ENCODE measurements at regions of chr1 and their contacts with region 1.

Region 1: GRCh38 chr1:240732390-240732789 is 120.4 kb upstream of the GREM2 start:
- DNase-seq: no peak
- ATAC-seq: peak; percentile 53
- H3K4me3 Mint-ChIP-seq: no peak overlapping the region
- H3K27ac Mint-ChIP-seq: no peak overlapping the region
- H3K4me1 Mint-ChIP-seq: no peaks in the 10 kb centered on the region
- H3K27me3 Mint-ChIP-seq: no peaks in the 10 kb centered on the region
- CTCF ChIP-seq: peak; percentile 64

Region 2: DNA sequence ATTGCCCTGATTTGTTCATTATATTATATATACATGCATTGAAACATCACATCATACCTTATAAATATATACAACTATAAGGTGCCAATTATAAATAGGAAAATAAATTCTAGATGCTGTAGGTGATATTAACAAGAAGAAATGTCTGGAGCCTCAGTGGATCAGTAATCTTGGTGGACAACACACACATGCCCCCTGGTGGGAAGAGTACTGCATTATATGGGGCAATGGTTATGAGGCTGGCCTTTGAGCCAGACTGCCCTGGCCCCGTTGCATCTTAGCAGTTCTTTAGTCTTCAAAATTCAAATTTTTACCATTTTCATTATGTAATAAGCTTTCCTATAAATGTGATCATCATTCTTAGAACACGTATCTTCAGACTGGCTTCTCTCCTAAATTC is 214.5 kb after region 1 on chr1:
- CTCF ChIA-PET with region 1: no interaction called
- POLR2A ChIA-PET with region 1: no interaction called
- intact Hi-C with region 1: loop called (anchors 10 kb)
- DNase-seq: peak; percentile 25
- ATAC-seq: no peak
- H3K4me3 Mint-ChIP-seq: no peak overlapping the region
- H3K27ac Mint-ChIP-seq: no peak overlapping the region
- H3K4me1 Mint-ChIP-seq: no peaks in the 10 kb centered on the region
- H3K27me3 Mint-ChIP-seq: no peaks in the 10 kb centered on the region
- CTCF ChIP-seq: peak; percentile 30

Measured in activated CD8-positive, alpha-beta T cell treated with anti-CD3 and anti-CD28 coated beads for 36 hours (primary cell).